RWPE1 (cell line): ENCODE measurements at regions of chr1 and their contacts with region 1.

Region 1: DNA sequence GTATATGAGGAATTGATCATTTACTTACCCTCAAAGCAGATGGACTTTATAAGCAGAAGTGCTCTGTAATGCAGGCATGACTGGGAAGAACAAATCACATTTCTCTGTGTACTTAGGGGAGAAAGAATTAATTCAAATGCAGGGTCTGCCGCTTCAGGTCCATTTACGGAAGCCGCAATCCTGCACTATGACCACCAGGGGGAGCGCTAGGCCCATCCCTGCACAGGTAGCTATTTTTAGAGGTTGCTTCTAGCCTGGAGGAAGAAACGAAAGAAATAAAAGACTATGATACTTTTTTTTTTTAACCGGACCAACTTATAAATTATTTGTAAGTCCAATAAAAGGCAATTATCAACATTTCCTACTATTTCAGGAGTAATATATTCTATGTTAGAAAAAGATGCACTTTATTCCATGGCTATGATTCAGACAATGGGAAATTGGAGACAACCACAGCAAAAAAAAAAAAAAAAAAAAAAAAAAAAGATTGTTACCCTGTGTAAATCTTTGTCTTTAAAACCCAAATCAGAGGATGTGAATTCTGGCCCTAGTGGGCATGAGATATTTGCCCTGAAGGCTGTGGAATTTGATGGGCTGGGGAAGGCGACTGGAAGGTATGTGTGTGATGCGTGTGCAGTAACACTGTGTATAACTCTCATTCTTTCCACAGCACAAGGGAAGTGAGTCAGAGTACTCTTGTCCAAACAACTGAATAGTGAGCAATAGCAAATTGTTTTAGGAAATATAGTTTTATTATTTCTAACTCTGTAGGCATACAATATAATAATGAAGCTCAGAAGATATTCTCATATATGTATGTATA is 12.9 kb upstream of the FYB2 start:
- DNase-seq: peak; percentile 58
- H3K27ac ChIP-seq: no peak overlapping the region
- CTCF ChIP-seq: peak; percentile 95

Region 2: DNA sequence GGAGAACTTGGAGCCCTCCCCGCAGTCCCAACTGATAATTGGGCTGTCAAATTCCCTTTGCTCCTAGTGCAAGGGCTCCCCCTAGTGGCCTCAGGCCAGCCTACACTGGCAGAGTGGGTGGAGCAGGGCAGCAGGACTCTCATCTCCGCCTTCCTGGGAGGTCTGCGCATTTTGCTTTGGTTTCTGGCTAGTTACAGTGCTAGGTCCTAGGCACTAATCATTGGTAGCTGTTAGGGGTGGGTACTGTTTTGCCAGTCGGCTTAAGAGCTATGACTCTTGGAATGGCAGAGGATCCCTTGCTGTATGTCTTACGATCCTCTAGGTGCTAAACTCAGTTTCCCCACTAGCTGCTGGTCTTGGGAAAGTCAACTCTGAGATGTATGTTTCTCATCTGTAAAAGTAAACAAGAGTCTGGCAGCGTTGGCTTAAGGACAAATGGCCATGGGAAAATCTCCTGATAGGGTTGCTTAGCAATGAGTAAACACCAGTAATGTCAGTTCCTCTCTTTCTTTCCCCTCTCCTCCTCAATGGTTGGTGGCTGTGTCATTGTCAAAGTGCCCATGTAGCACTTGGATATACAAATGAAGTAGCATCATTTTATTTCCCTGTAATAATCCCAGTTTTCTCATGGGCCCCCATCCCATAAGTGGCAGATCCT is 10.8 kb before region 1 on chr1:
- CTCF ChIA-PET with region 1: interaction called, 10 read pairs
- POLR2A ChIA-PET with region 1: no interaction called
- DNase-seq: peak; percentile 78
- H3K27ac ChIP-seq: no peak overlapping the region
- CTCF ChIP-seq: peak; percentile 87

Region 3: GRCh38 chr1:56856186-56856585 is 24.1 kb after region 1 on chr1:
- CTCF ChIA-PET with region 1: no interaction called
- POLR2A ChIA-PET with region 1: no interaction called
- DNase-seq: no peak
- H3K27ac ChIP-seq: no peak overlapping the region
- CTCF ChIP-seq: no peak